Transverse colon (tissue), 4 donors: ENCODE measurements at regions of chr1 and their contacts with region 1.

Region 1: GRCh38 chr1:193471981-193472380 is 285.6 kb upstream of the B3GALT2 start:
- DNase-seq: no peak
- H3K4me3 ChIP-seq: no peak overlapping the region
- H3K27ac ChIP-seq: no peak overlapping the region
- H3K4me1 ChIP-seq: no peaks in the 10 kb centered on the region
- H3K27me3 ChIP-seq: no peaks in the 10 kb centered on the region
- CTCF ChIP-seq: no peak
- EP300 ChIP-seq: no peak
- POLR2A ChIP-seq: no peak

Region 2: DNA sequence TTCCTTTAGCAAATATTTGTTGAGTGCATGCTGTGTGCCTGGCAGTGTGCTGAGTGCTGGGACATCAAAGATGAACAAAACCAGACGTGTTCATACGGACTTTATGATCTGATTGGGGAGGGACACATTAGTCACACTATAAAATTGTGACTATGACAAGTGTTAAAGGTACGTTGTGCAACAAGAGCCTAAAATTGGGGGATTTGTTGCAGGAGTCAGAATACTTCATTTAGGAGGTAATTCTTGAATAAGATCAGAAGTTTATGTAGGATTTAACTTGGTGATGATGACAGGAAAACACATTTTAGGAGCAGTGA is 315.2 kb before region 1 on chr1:
- in situ Hi-C with region 1: no loop called
- intact Hi-C with region 1: no loop called
- DNase-seq: no peak
- H3K4me3 ChIP-seq: no peak overlapping the region
- H3K27ac ChIP-seq: no peak overlapping the region
- H3K4me1 ChIP-seq: peaks cover 0 to 25% (median 3%) of the 10 kb centered on the region in 4 donors
- H3K27me3 ChIP-seq: no peaks in the 10 kb centered on the region
- CTCF ChIP-seq: no peak
- EP300 ChIP-seq: no peak
- POLR2A ChIP-seq: no peak

Region 3: GRCh38 chr1:193417945-193418744 is 53.8 kb before region 1 on chr1:
- in situ Hi-C with region 1: no loop called
- intact Hi-C with region 1: no loop called
- DNase-seq: no peak
- H3K4me3 ChIP-seq: peak overlapping the region in 2 of 4 donors; percentile 11 to 33
- H3K27ac ChIP-seq: peak overlapping the region; percentile 6 to 65 (median 54)
- H3K4me1 ChIP-seq: peaks cover 0 to 17% (median 4%) of the 10 kb centered on the region in 4 donors
- H3K27me3 ChIP-seq: no peaks in the 10 kb centered on the region
- CTCF ChIP-seq: no peak
- EP300 ChIP-seq: no peak
- POLR2A ChIP-seq: no peak

Region 4: GRCh38 chr1:193457681-193458080 is 14.3 kb before region 1 on chr1:
- in situ Hi-C with region 1: no loop called
- intact Hi-C with region 1: loop called (anchors 2 kb)
- DNase-seq: no peak
- H3K4me3 ChIP-seq: no peak overlapping the region
- H3K27ac ChIP-seq: peak overlapping the region in 1 of 4 donors; percentile 0
- H3K4me1 ChIP-seq: peaks cover 0 to 9% (median 0%) of the 10 kb centered on the region in 4 donors
- H3K27me3 ChIP-seq: no peaks in the 10 kb centered on the region
- CTCF ChIP-seq: no peak
- EP300 ChIP-seq: no peak
- POLR2A ChIP-seq: no peak

Region 5: DNA sequence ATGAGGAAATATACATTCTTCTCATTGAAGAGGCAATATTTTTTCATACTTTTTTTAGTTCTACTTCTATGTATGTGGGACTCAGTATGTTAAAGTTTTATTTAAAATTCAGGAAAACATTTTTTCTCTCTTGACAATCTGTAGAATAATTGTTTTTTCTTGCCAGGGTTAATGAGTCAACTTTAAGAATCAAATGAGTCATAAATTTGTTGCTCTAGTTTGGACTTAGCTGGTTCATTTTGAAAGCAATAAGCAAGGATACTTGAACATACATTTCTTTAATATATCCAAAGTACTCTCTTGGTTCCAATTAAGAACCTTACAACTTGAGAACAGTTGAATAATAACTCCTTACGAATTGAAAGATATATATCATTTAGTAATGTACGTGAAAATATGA is 859.8 kb after region 1 on chr1:
- in situ Hi-C with region 1: no loop called
- intact Hi-C with region 1: no loop called
- DNase-seq: no peak
- H3K4me3 ChIP-seq: no peak overlapping the region
- H3K27ac ChIP-seq: no peak overlapping the region
- H3K4me1 ChIP-seq: no peaks in the 10 kb centered on the region
- H3K27me3 ChIP-seq: no peaks in the 10 kb centered on the region
- CTCF ChIP-seq: no peak
- EP300 ChIP-seq: no peak
- POLR2A ChIP-seq: no peak